B cell (primary cell): ENCODE measurements at regions of chr13 and their contacts with region 1.

Region 1: DNA sequence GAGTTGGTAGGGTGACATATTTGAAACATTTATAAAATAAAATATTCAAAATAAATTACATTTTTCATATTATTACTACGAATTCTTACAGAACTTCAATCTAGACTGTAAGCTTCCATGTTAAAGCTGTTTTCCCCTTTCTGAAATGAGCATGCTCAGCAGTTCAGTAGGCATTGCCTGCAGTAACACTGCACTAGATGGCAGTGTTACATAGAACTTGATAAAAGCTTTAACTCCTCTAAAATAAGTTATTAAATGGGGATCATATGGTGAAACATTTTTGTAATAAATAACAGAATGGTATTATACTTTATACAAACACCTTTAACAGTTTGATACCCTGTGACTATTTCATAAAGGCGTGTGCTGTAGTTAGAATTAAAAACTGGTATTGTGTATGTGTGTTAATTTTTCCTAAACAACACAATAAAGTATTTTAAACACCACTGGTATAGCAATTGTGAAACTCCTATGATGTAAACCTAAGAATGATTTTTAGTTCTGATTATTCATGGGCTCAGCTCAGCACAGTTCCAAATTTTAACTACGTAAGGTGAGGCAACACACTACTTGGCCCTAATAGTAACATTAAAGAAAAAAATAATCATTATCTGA is 11.6 kb upstream of the GPR18 start:
- DNase-seq: peak; percentile 81
- ATAC-seq: peak; percentile 76
- H3K4me3 ChIP-seq: no peak overlapping the region
- H3K4me3 Mint-ChIP-seq: no peak overlapping the region
- H3K27ac ChIP-seq: peak overlapping the region; percentile 69 to 89
- H3K27ac Mint-ChIP-seq: peak overlapping the region; percentile 50
- H3K4me1 ChIP-seq: peaks cover 45 to 55% of the 10 kb centered on the region in 2 donors
- H3K4me1 Mint-ChIP-seq: peaks cover 59% of the 10 kb centered on the region
- H3K27me3 ChIP-seq: no peaks in the 10 kb centered on the region
- H3K27me3 Mint-ChIP-seq: no peaks in the 10 kb centered on the region
- CTCF ChIP-seq: peak; percentile 92

Region 2: GRCh38 chr13:99176309-99177276 is 93.1 kb before region 1 on chr13:
- CTCF ChIA-PET with region 1: interaction called, 661 read pairs
- POLR2A ChIA-PET with region 1: interaction called, 10 read pairs
- intact Hi-C with region 1: loop called (anchors 1 kb)
- DNase-seq: peak; percentile 88
- ATAC-seq: peak; percentile 84
- H3K4me3 ChIP-seq: no peak overlapping the region
- H3K4me3 Mint-ChIP-seq: peak overlapping the region; percentile 58
- H3K27ac ChIP-seq: no peak overlapping the region
- H3K27ac Mint-ChIP-seq: peak overlapping the region; percentile 72
- H3K4me1 ChIP-seq: peaks cover 37 to 43% of the 10 kb centered on the region in 2 donors
- H3K4me1 Mint-ChIP-seq: peaks cover 39% of the 10 kb centered on the region
- H3K27me3 ChIP-seq: no peaks in the 10 kb centered on the region
- H3K27me3 Mint-ChIP-seq: no peaks in the 10 kb centered on the region
- CTCF ChIP-seq: peak; percentile 96

Region 3: GRCh38 chr13:99237981-99238662 is 31.6 kb before region 1 on chr13:
- CTCF ChIA-PET with region 1: interaction called, 43 read pairs
- POLR2A ChIA-PET with region 1: no interaction called
- intact Hi-C with region 1: no loop called
- DNase-seq: no peak
- ATAC-seq: peak; percentile 45
- H3K4me3 ChIP-seq: peak overlapping the region in 4 of 5 experiments; percentile 0 to 58 (median 28)
- H3K4me3 Mint-ChIP-seq: peak overlapping the region; percentile 78
- H3K27ac ChIP-seq: peak overlapping the region; percentile 63 to 68
- H3K27ac Mint-ChIP-seq: peak overlapping the region; percentile 69
- H3K4me1 ChIP-seq: peaks cover 27 to 32% of the 10 kb centered on the region in 2 donors
- H3K4me1 Mint-ChIP-seq: peaks cover 58% of the 10 kb centered on the region
- H3K27me3 ChIP-seq: no peaks in the 10 kb centered on the region
- H3K27me3 Mint-ChIP-seq: no peaks in the 10 kb centered on the region
- CTCF ChIP-seq: no peak

Region 4: DNA sequence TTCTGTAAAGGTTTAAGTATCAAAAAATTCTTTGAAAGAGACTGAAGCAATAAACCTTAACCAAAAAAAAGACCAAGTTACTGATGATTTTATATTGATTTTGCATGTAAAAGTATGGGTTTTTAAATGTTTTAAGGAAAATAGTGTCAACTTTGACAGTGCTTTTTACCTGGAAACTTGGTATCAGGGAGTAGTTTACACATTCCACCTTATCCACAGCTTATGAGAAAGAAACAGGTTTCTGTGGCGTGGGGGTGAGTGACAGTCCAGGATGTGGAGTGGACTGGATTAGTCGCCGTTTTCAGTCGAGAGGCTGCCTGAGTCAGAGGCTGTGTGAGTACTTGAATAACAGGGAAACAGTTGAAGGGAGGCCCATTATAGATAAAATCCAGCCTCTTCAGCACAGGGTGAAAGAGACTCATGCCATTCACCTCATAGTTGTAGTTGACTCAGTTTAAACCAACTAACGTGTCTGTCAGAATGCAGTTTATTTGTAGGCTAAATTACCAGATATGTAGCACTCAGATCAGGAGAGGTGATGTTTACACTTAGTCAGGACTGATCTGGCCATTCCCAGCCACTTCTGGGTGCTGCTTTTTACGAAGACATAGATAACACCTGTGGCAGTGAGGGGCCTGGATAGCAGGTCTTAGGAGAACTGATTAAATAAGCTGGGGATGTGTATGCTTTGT is 38.1 kb after region 1 on chr13:
- CTCF ChIA-PET with region 1: interaction called, 206 read pairs
- POLR2A ChIA-PET with region 1: interaction called, 4 read pairs
- intact Hi-C with region 1: loop called (anchors 1 kb)
- DNase-seq: no peak
- ATAC-seq: peak; percentile 25
- H3K4me3 ChIP-seq: peak overlapping the region; percentile 37 to 97 (median 71)
- H3K4me3 Mint-ChIP-seq: peak overlapping the region; percentile 99
- H3K27ac ChIP-seq: peak overlapping the region; percentile 73 to 87
- H3K27ac Mint-ChIP-seq: peak overlapping the region; percentile 95
- H3K4me1 ChIP-seq: peaks cover 49 to 60% of the 10 kb centered on the region in 2 donors
- H3K4me1 Mint-ChIP-seq: peaks cover 69% of the 10 kb centered on the region
- H3K27me3 ChIP-seq: no peaks in the 10 kb centered on the region
- H3K27me3 Mint-ChIP-seq: no peaks in the 10 kb centered on the region
- CTCF ChIP-seq: no peak

Region 5: GRCh38 chr13:99366075-99366987 is 96.6 kb after region 1 on chr13:
- CTCF ChIA-PET with region 1: interaction called, 16 read pairs
- POLR2A ChIA-PET with region 1: no interaction called
- intact Hi-C with region 1: no loop called
- DNase-seq: peak; percentile 85
- ATAC-seq: peak; percentile 85
- H3K4me3 ChIP-seq: peak overlapping the region in 1 of 5 experiments; percentile 17
- H3K4me3 Mint-ChIP-seq: peak overlapping the region; percentile 63
- H3K27ac ChIP-seq: peak overlapping the region; percentile 19 to 29
- H3K27ac Mint-ChIP-seq: peak overlapping the region; percentile 82
- H3K4me1 ChIP-seq: peaks cover 53% of the 10 kb centered on the region in 2 donors
- H3K4me1 Mint-ChIP-seq: peaks cover 77% of the 10 kb centered on the region
- H3K27me3 ChIP-seq: no peaks in the 10 kb centered on the region
- H3K27me3 Mint-ChIP-seq: no peaks in the 10 kb centered on the region
- CTCF ChIP-seq: no peak

Region 6: GRCh38 chr13:99417201-99418102 is 147.7 kb after region 1 on chr13:
- CTCF ChIA-PET with region 1: interaction called, 53 read pairs
- POLR2A ChIA-PET with region 1: no interaction called
- intact Hi-C with region 1: no loop called
- DNase-seq: no peak
- ATAC-seq: no peak
- H3K4me3 ChIP-seq: no peak overlapping the region
- H3K4me3 Mint-ChIP-seq: no peak overlapping the region
- H3K27ac ChIP-seq: no peak overlapping the region
- H3K27ac Mint-ChIP-seq: peak overlapping the region; percentile 67
- H3K4me1 ChIP-seq: peaks cover 51 to 58% of the 10 kb centered on the region in 2 donors
- H3K4me1 Mint-ChIP-seq: peaks cover 48% of the 10 kb centered on the region
- H3K27me3 ChIP-seq: peaks cover 0 to 3% (median 0%) of the 10 kb centered on the region in 4 experiments
- H3K27me3 Mint-ChIP-seq: no peaks in the 10 kb centered on the region
- CTCF ChIP-seq: no peak

Region 7: GRCh38 chr13:99995589-99996380 is 726.1 kb after region 1 on chr13:
- CTCF ChIA-PET with region 1: no interaction called
- POLR2A ChIA-PET with region 1: no interaction called
- intact Hi-C with region 1: no loop called
- DNase-seq: peak; percentile 52
- ATAC-seq: no peak
- H3K4me3 ChIP-seq: peak overlapping the region in 1 of 5 experiments; percentile 0
- H3K4me3 Mint-ChIP-seq: no peak overlapping the region
- H3K27ac ChIP-seq: no peak overlapping the region
- H3K27ac Mint-ChIP-seq: no peak overlapping the region
- H3K4me1 ChIP-seq: peaks cover 7 to 31% of the 10 kb centered on the region in 2 donors
- H3K4me1 Mint-ChIP-seq: peaks cover 2% of the 10 kb centered on the region
- H3K27me3 ChIP-seq: peaks cover 8 to 76% (median 65%) of the 10 kb centered on the region in 4 experiments
- H3K27me3 Mint-ChIP-seq: peaks cover 72% of the 10 kb centered on the region
- CTCF ChIP-seq: no peak

Region 8: DNA sequence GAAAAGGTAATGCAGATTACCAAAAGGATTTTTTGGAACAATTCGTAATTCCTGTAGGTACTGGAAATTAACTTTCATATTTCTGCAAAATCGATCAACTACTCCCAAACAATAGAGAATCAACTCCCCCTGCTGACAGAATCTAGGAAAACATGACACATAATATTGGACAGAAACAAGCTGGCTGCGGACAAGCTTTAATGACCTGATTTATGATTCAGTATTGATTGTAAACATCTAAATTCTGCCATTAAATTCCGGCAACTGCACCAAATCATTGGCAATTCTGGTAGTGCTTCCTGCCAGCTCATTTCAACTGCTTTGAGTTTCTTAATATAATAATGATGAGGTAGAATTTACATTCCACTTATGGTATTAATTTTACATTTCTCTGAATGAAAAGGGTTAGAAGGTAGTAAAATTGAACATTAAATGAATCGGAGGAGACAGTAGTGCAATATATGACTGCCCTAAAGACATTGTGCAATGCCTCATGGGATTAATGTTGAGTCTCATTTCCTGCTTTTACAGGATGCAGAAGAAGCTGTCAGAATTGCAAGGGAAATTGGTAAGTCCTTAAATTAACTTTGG is 965.7 kb after region 1 on chr13:
- CTCF ChIA-PET with region 1: interaction called, 9 read pairs
- POLR2A ChIA-PET with region 1: no interaction called
- intact Hi-C with region 1: loop called (anchors 5 kb)
- DNase-seq: peak; percentile 50
- ATAC-seq: no peak
- H3K4me3 ChIP-seq: no peak overlapping the region
- H3K4me3 Mint-ChIP-seq: peak overlapping the region; percentile 23
- H3K27ac ChIP-seq: no peak overlapping the region
- H3K27ac Mint-ChIP-seq: no peak overlapping the region
- H3K4me1 ChIP-seq: peaks cover 6 to 7% of the 10 kb centered on the region in 2 donors
- H3K4me1 Mint-ChIP-seq: peaks cover 6% of the 10 kb centered on the region
- H3K27me3 ChIP-seq: no peaks in the 10 kb centered on the region
- H3K27me3 Mint-ChIP-seq: no peaks in the 10 kb centered on the region
- CTCF ChIP-seq: peak; percentile 67